ENCODE measurements at regions of chr1 and their contacts with region 1.

Region 1: GRCh38 chr1:153922972-153923925 is at the start of gene GATAD2B:
- DNase-seq: peak; percentile 100
- H3K4me3 Mint-ChIP-seq: peak within 1 kb of the TSS; percentile 86
- H3K27ac Mint-ChIP-seq: peak within 1 kb of the TSS; percentile 98
- H3K4me1 Mint-ChIP-seq: peaks cover 36% of the 10 kb centered on the region
- H3K27me3 Mint-ChIP-seq: peaks cover 2% of the 10 kb centered on the region
- total RNA-seq, gene GATAD2B: 68.8 and 69.0 TPM in 2 replicates

Region 2: GRCh38 chr1:153670859-153671627 is 252.2 kb before region 1 on chr1 and contains the start of gene ILF2:
- intact Hi-C with region 1: loop called (anchors 1 kb)
- DNase-seq: peak; percentile 99
- H3K4me3 Mint-ChIP-seq: no peak within 1 kb of the TSS
- H3K27ac Mint-ChIP-seq: peak within 1 kb of the TSS; percentile 85
- H3K4me1 Mint-ChIP-seq: peaks cover 26% of the 10 kb centered on the region
- H3K27me3 Mint-ChIP-seq: no peaks in the 10 kb centered on the region
- total RNA-seq, gene ILF2: 377 and 390 TPM in 2 replicates

Region 3: GRCh38 chr1:153727463-153728304 is 195.6 kb before region 1 on chr1 and contains the start of gene INTS3:
- intact Hi-C with region 1: no loop called
- DNase-seq: peak; percentile 100
- H3K4me3 Mint-ChIP-seq: peak within 1 kb of the TSS; percentile 96
- H3K27ac Mint-ChIP-seq: peak within 1 kb of the TSS; percentile 97
- H3K4me1 Mint-ChIP-seq: peaks cover 32% of the 10 kb centered on the region
- H3K27me3 Mint-ChIP-seq: no peaks in the 10 kb centered on the region
- total RNA-seq, gene INTS3: 63.1 and 64.8 TPM in 2 replicates

Region 4: DNA sequence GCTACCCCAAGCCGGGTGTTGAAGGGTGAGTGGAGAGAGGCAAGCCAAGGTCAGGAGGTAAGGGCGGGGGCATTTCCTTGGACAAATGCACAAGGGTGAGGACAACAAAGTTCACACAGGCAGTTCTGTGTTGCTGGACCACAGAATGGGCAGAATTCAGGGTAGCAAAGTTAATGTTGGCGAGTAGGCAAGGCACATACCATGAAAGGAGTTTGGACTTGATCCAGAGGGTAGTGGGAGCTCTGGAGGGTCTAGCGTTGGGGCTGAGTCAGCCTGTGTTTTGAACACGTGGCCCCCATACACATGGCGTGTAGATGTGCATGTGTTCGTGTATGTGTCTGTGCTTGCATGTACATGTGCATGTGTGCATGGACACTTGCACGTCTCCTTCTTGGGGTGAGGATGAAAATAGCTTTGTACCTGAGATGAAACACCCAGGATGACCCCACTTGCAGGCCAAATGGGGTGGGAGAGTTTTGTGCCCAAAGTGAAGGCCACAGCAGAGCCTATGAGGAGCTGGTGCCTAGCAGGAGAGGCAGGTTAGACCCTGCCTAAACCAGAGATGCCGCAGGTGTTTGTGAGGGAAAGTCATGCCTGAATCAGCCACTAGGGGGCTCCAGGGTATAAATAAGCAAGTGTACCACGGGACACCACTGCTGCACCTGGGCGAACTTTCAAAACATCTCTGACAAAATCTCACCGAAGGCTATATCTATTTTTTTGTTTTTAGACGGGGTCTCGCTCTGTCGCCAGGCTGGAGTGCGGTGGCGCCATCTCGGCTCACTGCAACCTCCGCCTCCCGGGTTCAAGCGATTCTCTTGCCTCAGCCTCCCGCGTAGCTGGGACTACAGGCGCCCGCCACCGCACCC is 126.2 kb before region 1 on chr1:
- intact Hi-C with region 1: loop called (anchors 2 kb)
- DNase-seq: peak; percentile 94
- H3K4me3 Mint-ChIP-seq: no peak overlapping the region
- H3K27ac Mint-ChIP-seq: no peak overlapping the region
- H3K4me1 Mint-ChIP-seq: peaks cover 12% of the 10 kb centered on the region
- H3K27me3 Mint-ChIP-seq: no peaks in the 10 kb centered on the region

Region 5: DNA sequence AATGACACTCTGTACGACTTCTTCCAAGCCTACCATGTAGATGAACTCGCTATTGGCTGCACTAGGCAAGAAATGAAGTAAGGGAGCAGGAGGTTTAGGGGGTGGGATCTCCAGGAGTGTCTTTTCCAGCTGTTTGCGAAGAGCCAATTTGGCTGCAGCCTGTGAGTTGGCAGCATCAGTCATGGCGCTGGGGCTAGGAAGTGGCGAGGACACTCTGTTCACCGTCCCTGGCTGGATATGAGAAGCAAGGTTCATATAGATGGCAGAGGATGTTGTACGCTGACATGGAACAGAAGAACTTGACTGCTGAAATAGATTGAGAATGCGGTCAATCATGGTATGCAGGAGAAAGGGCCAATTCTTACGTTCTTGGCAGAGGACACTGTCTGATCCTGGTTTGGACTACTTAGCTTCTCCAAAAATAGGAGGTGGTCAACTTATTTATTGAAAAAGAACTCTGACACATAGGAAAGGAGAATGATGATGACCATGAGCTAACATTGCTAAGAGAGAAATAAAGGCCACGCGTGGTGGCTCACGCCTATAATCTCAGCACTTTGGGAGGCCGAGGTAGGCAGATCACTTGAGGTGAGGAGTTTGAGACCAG is 106.9 kb before region 1 on chr1:
- intact Hi-C with region 1: loop called (anchors 1 kb)
- DNase-seq: no peak
- H3K4me3 Mint-ChIP-seq: no peak overlapping the region
- H3K27ac Mint-ChIP-seq: no peak overlapping the region
- H3K4me1 Mint-ChIP-seq: peaks cover 2% of the 10 kb centered on the region
- H3K27me3 Mint-ChIP-seq: no peaks in the 10 kb centered on the region

Region 6: DNA sequence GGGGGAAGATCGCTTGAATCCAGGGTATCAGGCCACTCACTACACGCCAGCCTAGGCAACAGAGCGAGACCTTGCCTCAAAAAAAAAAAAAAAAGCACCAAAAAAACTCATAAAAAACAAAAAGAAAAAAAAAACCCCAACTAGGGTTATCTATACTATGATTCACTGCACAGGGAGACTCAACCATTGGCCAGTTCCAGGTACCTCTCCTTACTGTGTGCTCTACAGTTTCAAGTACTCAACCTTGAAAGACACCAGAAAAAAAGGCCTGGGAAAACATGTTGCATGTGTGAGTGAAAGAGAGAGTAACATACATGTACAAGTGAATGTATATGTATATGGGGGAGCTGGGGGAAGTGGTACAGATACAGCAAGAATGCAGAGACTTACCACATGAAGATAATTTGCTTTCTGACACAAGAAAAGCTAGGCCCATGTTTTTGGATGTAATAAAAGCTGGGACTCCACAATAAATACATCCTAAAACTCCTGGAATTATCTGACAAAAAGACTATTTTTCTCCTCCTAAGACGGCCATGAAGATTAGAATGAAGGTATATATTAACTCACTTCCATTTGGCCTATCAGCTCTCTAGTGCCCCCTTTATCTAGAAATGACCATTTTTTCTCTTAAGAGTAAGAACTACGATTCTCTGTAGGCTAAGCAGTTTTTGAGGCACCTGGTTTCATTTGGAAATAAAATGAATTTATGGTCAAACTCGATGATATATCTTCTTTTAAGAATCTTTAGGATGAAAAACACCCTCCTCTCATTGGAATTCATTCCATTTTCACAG is 95.9 kb before region 1 on chr1:
- intact Hi-C with region 1: no loop called
- DNase-seq: no peak
- H3K4me3 Mint-ChIP-seq: no peak overlapping the region
- H3K27ac Mint-ChIP-seq: no peak overlapping the region
- H3K4me1 Mint-ChIP-seq: no peaks in the 10 kb centered on the region
- H3K27me3 Mint-ChIP-seq: no peaks in the 10 kb centered on the region

Region 7: DNA sequence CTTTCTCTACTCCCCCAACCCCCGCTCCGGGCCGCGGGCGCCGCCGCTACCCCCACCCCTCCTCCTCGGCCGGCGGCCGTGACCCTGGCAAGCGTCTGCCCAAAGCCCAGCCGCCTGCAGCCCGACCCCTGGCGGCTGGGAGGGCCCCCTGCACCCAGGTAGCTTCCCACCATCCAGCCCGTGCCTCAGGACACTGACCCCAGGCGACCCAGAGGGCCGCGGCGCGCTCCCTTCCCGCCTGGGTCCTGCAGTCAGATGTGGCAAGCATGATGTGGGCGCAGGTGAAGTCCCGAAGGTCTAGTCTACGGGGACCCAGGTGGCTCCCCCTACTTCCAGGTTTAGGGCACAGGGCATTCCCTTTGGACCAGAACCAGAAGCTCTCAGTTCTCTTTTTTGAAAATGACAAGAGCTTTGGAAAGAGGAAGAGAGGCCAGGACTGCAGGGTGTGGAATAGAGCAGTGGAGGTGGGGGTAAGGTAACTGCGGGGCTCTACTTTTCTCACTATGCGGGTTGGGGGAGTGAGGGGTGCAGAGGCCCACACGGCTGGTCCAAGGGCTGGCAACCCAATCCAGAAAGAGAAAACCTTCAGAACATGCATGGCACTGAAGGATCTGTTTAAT is 23.5 kb after region 1 on chr1 and contains the start of gene DENND4B:
- intact Hi-C with region 1: loop called (anchors 1 kb)
- DNase-seq: peak; percentile 93
- H3K4me3 Mint-ChIP-seq: peak within 1 kb of the TSS; percentile 96
- H3K27ac Mint-ChIP-seq: peak within 1 kb of the TSS; percentile 96
- H3K4me1 Mint-ChIP-seq: peaks cover 35% of the 10 kb centered on the region
- H3K27me3 Mint-ChIP-seq: no peaks in the 10 kb centered on the region
- total RNA-seq, gene DENND4B: 128 and 130 TPM in 2 replicates

Region 8: DNA sequence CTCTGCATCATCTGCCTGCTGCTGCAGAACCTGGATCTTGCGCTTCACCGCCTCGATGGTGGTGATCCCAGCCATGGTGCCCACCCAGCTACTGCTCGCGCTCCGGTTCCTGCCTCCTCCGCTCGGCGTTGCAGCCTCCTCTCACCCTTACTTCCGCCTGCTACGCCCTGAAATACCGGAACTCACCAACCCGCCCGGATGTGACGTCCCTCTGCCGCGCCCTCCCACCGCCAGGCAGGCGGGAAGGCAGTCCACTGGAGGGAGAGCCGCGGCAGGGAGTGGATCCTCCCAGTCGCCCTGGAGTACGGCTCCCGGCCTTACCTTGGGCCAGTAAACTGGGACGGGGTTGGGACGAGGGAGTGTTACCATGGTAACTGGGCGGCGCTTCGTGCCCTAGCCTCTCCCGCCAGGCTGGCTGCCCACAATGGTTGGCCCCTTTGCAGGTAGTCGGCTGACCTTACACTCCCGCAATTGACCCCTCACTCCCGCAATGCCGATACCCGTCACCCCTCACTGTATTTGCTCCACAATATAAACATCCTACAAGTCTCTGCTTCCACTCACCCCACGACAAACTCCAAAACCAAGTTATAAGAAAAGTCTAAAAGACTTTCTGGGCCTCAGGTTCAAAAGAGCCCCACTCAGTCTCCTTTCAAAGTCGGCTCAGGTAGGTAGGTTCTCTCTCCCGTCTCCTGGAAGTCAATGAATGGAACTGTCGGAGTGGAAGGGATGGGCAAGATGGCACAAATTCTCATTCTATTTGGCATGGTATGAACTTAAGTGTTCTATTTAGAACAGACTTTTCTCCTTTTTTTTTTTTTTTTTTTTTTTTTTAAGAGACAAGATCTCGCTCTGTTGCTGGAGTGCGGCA is 260.0 kb after region 1 on chr1:
- intact Hi-C with region 1: loop called (anchors 2 kb)
- DNase-seq: peak; percentile 99
- H3K4me3 Mint-ChIP-seq: peak overlapping the region; percentile 99
- H3K27ac Mint-ChIP-seq: peak overlapping the region; percentile 100
- H3K4me1 Mint-ChIP-seq: peaks cover 49% of the 10 kb centered on the region
- H3K27me3 Mint-ChIP-seq: peaks cover 4% of the 10 kb centered on the region